IMR-90 (cell line): ENCODE measurements at regions of chr1 and their contacts with region 1.

Region 1: DNA sequence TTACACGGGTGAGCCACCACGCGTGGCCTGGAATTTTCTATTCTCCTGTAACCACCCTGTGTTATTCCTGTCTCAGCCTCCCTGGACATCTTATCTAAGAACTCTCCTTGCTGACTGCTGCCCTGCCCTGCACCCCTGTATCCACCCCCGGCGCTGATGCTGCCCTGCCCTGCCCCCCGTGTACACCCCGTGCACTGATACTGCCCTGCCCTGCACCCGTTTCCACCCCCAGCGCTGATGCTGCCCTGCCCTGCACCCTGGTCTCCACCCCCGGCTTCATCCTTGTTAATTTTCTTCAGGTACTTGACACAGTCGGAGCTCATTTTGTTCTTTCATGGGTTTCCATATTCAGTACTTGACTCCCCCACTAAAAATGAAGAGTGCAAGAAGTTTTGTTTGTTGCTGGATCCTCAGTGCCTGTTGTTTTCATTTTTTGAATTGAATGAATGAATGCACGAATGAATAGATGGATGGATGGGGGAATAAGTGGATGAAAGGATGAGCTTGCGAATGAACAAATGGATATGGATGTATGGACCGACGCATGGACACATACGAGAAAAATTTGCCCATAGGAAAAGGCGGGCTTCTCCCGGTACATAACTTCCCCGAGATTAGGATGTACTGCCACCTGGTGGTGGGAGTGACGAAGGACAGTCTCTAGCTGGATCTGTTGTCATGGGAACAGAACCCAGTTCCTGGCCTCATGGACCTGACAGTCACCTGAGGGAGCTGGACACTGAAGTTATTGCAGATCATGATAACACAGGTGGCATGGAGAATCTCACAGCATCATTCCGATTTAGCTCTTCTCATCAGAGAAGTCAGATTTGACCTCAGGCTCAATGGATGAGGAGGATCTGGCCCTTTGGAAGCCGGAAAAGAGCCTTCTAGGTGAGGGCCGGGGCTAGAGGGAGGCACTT is 14.9 kb downstream of the AADACL4 start:
- DNase-seq: peak; percentile 76
- ATAC-seq: peak; percentile 98
- H3K4me3 ChIP-seq: no peak overlapping the region
- H3K27ac ChIP-seq: no peak overlapping the region
- H3K4me1 ChIP-seq: no peaks in the 10 kb centered on the region
- H3K27me3 ChIP-seq: peaks cover 21% of the 10 kb centered on the region
- CTCF ChIP-seq: peak; percentile 98
- POLR2A ChIP-seq: 0 out of 2 replicates have a peak, but pooled peaks have one; percentile 31
- RAD21 ChIP-seq: peak; percentile 97

Region 2: DNA sequence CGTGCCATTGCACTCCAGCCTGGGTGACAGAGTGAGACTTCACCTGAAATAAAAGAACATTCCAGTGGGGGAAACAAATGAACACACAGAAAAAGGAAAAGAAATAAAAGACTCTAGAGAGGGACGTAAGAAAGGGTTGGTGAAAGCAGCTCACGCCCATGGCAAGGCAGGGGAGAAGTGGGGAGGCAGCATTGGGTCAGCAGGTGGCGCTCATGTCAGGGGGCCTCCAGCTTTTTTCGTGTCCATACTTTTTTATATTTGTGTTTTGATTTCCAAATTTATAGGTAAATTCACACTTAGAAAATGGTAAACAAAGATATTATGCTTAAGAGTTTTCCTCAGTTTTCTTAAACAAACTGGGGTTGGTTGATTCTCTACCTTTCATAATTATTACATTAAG is 383.4 kb before region 1 on chr1:
- CTCF ChIA-PET with region 1: interaction called, 3 read pairs
- POLR2A ChIA-PET with region 1: no interaction called
- dilution Hi-C with region 1: no loop called
- in situ Hi-C with region 1: no loop called
- intact Hi-C with region 1: loop called (anchors 1 kb)
- DNase-seq: no peak
- ATAC-seq: peak; percentile 57; the same call in 1 of the 2 replicates
- H3K4me3 ChIP-seq: no peak overlapping the region
- H3K27ac ChIP-seq: no peak overlapping the region
- H3K4me1 ChIP-seq: no peaks in the 10 kb centered on the region
- H3K27me3 ChIP-seq: no peaks in the 10 kb centered on the region
- CTCF ChIP-seq: peak; percentile 59
- POLR2A ChIP-seq: no peak
- RAD21 ChIP-seq: peak; percentile 57

Region 3: GRCh38 chr1:12314333-12314903 is 344.4 kb before region 1 on chr1:
- CTCF ChIA-PET with region 1: interaction called, 15 read pairs
- POLR2A ChIA-PET with region 1: no interaction called
- dilution Hi-C with region 1: no loop called
- in situ Hi-C with region 1: loop called (anchors 5 kb)
- intact Hi-C with region 1: loop called (anchors 1 kb)
- DNase-seq: peak; percentile 54
- ATAC-seq: peak; percentile 85
- H3K4me3 ChIP-seq: no peak overlapping the region
- H3K27ac ChIP-seq: no peak overlapping the region
- H3K4me1 ChIP-seq: no peaks in the 10 kb centered on the region; the same call in 1 of the 2 replicates
- H3K27me3 ChIP-seq: no peaks in the 10 kb centered on the region
- CTCF ChIP-seq: peak; percentile 63
- POLR2A ChIP-seq: no peak
- RAD21 ChIP-seq: peak; percentile 54

Region 4: GRCh38 chr1:12549460-12550349 is 109.1 kb before region 1 on chr1:
- CTCF ChIA-PET with region 1: no interaction called
- POLR2A ChIA-PET with region 1: no interaction called
- dilution Hi-C with region 1: no loop called
- in situ Hi-C with region 1: no loop called
- intact Hi-C with region 1: no loop called
- DNase-seq: peak; percentile 98
- ATAC-seq: peak; percentile 90
- H3K4me3 ChIP-seq: no peak overlapping the region
- H3K27ac ChIP-seq: peak overlapping the region; percentile 60
- H3K4me1 ChIP-seq: peaks cover 17% of the 10 kb centered on the region
- H3K27me3 ChIP-seq: peaks cover 7% of the 10 kb centered on the region; the same call in 1 of the 2 replicates
- CTCF ChIP-seq: no peak
- POLR2A ChIP-seq: no peak
- RAD21 ChIP-seq: peak; percentile 25